OCI-LY7 (cell line): ENCODE measurements at regions of chr13 and their contacts with region 1.

Region 1: GRCh38 chr13:33992853-33993336 is 174.9 kb downstream of the RFC3 start:
- DNase-seq: peak; percentile 57
- H3K4me3 ChIP-seq: peak overlapping the region; percentile 29
- H3K27ac ChIP-seq: peak overlapping the region; percentile 34
- H3K4me1 ChIP-seq: peaks cover 41% of the 10 kb centered on the region
- CTCF ChIP-seq: no peak

Region 2: DNA sequence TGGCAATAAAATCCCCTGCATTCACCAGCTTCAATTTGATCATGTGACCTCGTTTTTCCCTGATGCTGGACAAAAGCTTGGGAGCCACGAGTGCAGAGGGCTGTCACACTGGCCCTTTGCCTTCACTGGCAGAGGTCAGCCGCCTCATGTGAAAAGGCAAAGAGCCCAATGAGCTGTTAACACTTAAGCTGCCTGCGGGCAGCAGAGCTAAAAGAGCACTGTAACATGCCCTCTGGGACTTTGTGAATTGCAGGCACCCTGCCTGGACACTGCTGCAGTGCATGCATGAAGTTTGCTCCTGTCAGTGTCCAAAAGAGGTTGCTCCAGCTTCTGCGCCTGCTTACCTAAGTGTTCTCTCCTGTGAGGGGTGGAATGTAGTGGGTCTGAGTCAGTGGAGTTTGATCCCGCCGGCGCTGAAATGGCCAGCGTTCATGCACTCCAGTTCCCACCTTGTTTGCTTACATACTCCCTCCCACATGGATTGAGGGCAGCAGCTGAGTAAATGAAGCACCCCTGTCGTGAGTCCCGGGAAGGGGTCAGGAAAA is 18.7 kb after region 1 on chr13:
- CTCF ChIA-PET with region 1: interaction called, 3 read pairs
- POLR2A ChIA-PET with region 1: interaction called, 12 read pairs
- intact Hi-C with region 1: no loop called
- DNase-seq: no peak
- H3K4me3 ChIP-seq: no peak overlapping the region
- H3K27ac ChIP-seq: no peak overlapping the region
- H3K4me1 ChIP-seq: no peaks in the 10 kb centered on the region
- CTCF ChIP-seq: no peak

Region 3: GRCh38 chr13:34037636-34038540 is 45.0 kb after region 1 on chr13:
- CTCF ChIA-PET with region 1: no interaction called
- POLR2A ChIA-PET with region 1: interaction called, 10 read pairs
- intact Hi-C with region 1: loop called (anchors 5 kb)
- DNase-seq: peak; percentile 47
- H3K4me3 ChIP-seq: peak overlapping the region; percentile 30
- H3K27ac ChIP-seq: peak overlapping the region; percentile 56
- H3K4me1 ChIP-seq: peaks cover 28% of the 10 kb centered on the region
- CTCF ChIP-seq: no peak

Region 4: GRCh38 chr13:34064456-34065205 is 71.7 kb after region 1 on chr13:
- CTCF ChIA-PET with region 1: no interaction called
- POLR2A ChIA-PET with region 1: no interaction called
- intact Hi-C with region 1: no loop called
- DNase-seq: no peak
- H3K4me3 ChIP-seq: no peak overlapping the region
- H3K27ac ChIP-seq: no peak overlapping the region
- H3K4me1 ChIP-seq: no peaks in the 10 kb centered on the region
- CTCF ChIP-seq: no peak

Region 5: DNA sequence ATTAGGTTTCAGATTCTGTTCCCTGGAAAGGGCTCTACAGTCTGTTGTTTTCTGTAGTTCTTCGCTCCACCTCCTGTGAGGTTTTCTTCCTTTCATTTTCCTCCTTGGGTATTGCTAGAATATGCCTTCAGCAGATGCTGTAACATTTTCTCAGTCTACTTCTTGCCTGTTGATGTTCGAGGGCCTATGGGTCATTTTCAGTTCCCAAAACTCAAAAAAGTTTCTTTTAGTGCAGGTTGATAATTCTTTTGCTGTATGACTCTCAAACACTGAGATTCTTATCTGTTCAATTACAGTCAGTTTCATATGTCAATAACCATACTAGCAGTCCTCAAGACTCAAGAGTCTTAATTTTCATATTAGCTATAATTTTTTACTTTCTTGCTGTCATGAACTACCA is 93.4 kb after region 1 on chr13:
- CTCF ChIA-PET with region 1: no interaction called
- POLR2A ChIA-PET with region 1: no interaction called
- intact Hi-C with region 1: no loop called
- DNase-seq: no peak
- H3K4me3 ChIP-seq: no peak overlapping the region
- H3K27ac ChIP-seq: no peak overlapping the region
- H3K4me1 ChIP-seq: no peaks in the 10 kb centered on the region
- CTCF ChIP-seq: no peak

Region 6: DNA sequence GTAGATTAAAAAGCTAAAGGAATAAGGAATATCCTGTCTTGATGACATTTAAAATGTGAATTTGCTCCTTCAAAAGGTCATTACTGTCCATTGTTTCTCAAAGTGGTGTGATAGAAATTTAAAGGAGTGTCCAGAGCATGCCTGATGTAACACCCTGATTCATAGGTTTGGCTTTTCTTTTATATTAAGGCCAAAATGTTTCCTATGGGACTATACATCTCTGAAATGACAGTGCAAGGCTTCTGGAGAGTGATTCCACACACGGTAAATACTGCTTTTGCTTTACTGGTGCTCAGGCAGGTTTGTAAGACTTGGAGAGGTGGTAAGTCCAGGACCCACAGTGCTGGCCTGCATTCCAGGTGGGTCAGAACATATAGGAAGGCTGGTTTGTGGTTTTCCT is 114.9 kb after region 1 on chr13:
- CTCF ChIA-PET with region 1: no interaction called
- POLR2A ChIA-PET with region 1: no interaction called
- intact Hi-C with region 1: no loop called
- DNase-seq: no peak
- H3K4me3 ChIP-seq: no peak overlapping the region
- H3K27ac ChIP-seq: no peak overlapping the region
- H3K4me1 ChIP-seq: no peaks in the 10 kb centered on the region
- CTCF ChIP-seq: no peak